Naive thymus-derived CD4-positive, alpha-beta T cell (primary cell): ENCODE measurements at regions of chr9 and their contacts with region 1.

Region 1: GRCh38 chr9:98536542-98537173 is 172.1 kb downstream of the GABBR2 start:
- DNase-seq: peak in 1 of 9 donors; percentile 25
- ATAC-seq: peak; percentile 36
- H3K4me3 ChIP-seq: no peak overlapping the region
- H3K4me3 Mint-ChIP-seq: no peak overlapping the region
- H3K27ac ChIP-seq: no peak overlapping the region
- H3K27ac Mint-ChIP-seq: no peak overlapping the region
- H3K4me1 ChIP-seq: no peaks in the 10 kb centered on the region
- H3K4me1 Mint-ChIP-seq: peaks cover 0 to 2% (median 0%) of the 10 kb centered on the region in 7 donors
- H3K27me3 ChIP-seq: no peaks in the 10 kb centered on the region
- H3K27me3 Mint-ChIP-seq: peaks cover 0 to 18% (median 7%) of the 10 kb centered on the region in 5 donors

Region 2: GRCh38 chr9:98742325-98743280 is 205.9 kb after region 1 on chr9:
- CTCF ChIA-PET with region 1: no interaction called
- POLR2A ChIA-PET with region 1: no interaction called
- intact Hi-C with region 1: no loop called
- DNase-seq: no peak
- ATAC-seq: no peak
- H3K4me3 ChIP-seq: no peak overlapping the region
- H3K4me3 Mint-ChIP-seq: no peak overlapping the region
- H3K27ac ChIP-seq: no peak overlapping the region
- H3K27ac Mint-ChIP-seq: no peak overlapping the region
- H3K4me1 ChIP-seq: no peaks in the 10 kb centered on the region
- H3K4me1 Mint-ChIP-seq: no peaks in the 10 kb centered on the region
- H3K27me3 ChIP-seq: no peaks in the 10 kb centered on the region
- H3K27me3 Mint-ChIP-seq: no peaks in the 10 kb centered on the region

Region 3: DNA sequence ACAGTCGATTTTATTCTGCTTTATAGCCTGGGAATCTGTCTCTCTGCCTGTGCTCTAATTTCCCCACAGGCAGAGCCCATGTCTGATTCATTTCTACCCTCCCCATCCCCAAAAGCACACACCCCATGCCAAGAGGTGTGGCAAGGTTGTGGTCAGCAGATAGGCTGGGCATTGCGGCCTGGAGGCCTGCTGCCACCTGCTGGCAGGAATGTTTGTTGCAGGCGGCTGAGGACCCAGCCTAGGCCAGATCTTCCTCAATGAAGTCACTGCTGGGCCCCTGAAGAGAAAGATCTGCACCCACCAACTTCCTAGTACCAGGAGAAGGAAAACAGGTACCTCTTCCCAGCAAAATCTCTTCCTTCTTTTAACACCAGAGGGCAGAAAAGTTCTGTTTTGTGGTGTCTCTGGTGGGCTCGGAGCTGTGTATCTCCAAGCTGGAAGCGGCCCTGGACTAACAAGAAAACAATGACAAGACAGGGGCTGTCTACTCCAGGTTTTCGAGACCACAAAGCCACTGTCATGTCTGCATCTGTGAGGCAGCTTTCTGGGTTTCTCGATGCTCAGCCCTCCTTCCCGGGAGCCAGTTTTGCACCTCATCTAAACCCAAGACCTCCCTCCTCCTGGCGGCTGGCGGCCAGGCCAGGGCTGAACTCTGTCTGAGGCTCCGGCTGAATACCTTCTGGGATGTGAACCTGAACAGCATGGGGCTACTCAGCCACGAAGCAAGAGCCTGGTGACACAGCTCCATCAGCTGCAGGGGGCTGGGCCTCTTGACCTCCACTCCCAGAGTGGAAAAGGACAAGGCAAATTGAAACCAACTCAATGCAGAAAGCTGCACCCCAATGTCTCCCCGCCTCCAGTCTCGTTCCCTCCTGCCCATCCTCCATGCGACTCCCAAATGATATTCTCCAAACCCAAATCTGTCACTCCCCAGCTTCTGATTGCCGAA is 254.8 kb after region 1 on chr9:
- CTCF ChIA-PET with region 1: no interaction called
- POLR2A ChIA-PET with region 1: no interaction called
- intact Hi-C with region 1: loop called in 1 of 2 experiments (anchors 1 kb)
- DNase-seq: peak in 8 of 9 donors; percentile 24 to 74 (median 40)
- ATAC-seq: peak; percentile 88
- H3K4me3 ChIP-seq: no peak overlapping the region
- H3K4me3 Mint-ChIP-seq: peak overlapping the region in 2 of 10 donors; percentile 15 to 29
- H3K27ac ChIP-seq: no peak overlapping the region
- H3K27ac Mint-ChIP-seq: peak overlapping the region in 5 of 9 donors; percentile 5 to 56 (median 19)
- H3K4me1 ChIP-seq: peaks cover 6 to 16% of the 10 kb centered on the region in 2 donors
- H3K4me1 Mint-ChIP-seq: peaks cover 17 to 33% (median 30%) of the 10 kb centered on the region in 7 donors
- H3K27me3 ChIP-seq: no peaks in the 10 kb centered on the region
- H3K27me3 Mint-ChIP-seq: peaks cover 0 to 9% (median 0%) of the 10 kb centered on the region in 5 donors